Mammary epithelial cell (primary cell): ENCODE measurements at regions of chr16 and their contacts with region 1.

Region 1: DNA sequence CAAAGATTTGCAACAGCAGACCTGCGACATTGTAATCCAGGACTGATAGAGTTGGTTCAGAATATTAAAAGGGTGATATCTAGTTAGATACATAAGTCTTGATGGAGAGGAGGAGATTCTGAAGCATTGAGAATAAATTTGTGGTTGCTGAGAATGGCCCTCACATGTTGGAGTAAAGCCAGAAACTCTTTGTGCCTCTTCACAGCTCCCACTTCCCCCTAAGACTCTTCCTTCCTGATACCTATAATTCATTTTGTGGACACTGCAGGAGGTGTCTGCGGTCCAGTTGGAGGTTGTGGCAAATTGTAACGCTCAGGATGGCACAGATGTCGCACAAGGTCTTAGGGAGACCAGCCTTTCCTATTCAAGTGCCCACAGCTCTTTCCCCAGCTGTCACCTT is 17.5 kb downstream of the WWOX start:
- DNase-seq: no peak
- H3K4me3 ChIP-seq: no peak overlapping the region
- H3K27ac ChIP-seq: no peak overlapping the region
- H3K4me1 ChIP-seq: no peaks in the 10 kb centered on the region
- H3K27me3 ChIP-seq: no peaks in the 10 kb centered on the region
- CTCF ChIP-seq: no peak

Region 2: DNA sequence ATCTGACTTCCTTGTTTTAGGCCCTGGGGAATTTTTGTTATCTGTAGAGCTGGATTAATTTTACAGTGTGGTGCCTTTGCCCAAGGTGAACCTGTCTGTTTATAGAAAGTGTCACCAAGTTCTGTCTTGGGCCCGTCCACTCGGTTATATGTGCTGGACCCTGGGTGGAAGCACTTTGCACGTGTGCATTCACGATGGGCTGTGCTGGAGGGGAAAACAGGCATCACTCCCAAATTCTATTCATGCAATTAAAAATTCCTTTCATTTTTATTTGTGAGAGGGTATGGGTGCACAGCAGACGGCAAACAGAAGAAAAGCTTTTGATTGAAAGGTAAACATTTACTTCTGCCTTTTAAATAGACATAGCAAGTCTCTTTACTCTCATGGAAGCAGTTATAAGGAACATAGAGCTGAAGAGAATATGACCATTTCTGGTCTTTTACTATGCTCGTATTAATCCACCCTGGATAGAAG is 83.7 kb after region 1 on chr16:
- CTCF ChIA-PET with region 1: no interaction called
- dilution Hi-C with region 1: loop called (anchors 5 kb)
- in situ Hi-C with region 1: no loop called
- intact Hi-C with region 1: no loop called
- DNase-seq: no peak
- H3K4me3 ChIP-seq: no peak overlapping the region
- H3K27ac ChIP-seq: no peak overlapping the region
- H3K4me1 ChIP-seq: no peaks in the 10 kb centered on the region
- H3K27me3 ChIP-seq: no peaks in the 10 kb centered on the region
- CTCF ChIP-seq: no peak

Region 3: DNA sequence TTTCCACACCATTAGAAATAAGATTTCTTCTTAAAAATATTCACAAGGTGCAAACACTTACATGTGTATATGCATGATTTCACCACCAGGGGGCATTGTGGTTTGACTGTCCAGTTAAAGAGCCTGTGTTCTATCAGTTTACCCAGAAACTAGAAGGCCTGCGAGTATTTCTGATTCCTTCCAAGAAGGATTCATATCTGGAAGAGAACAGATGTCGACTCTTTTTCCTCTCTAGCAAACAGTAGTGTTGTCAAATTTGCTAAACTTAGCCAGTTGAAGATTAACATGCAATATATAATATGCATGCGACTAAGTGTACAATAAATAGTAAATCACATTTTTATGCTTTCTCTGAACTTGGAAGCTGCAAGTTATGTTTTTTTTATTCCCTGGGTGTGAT is 386.7 kb after region 1 on chr16:
- CTCF ChIA-PET with region 1: no interaction called
- dilution Hi-C with region 1: loop called (anchors 10 kb)
- in situ Hi-C with region 1: no loop called
- intact Hi-C with region 1: no loop called
- DNase-seq: no peak
- H3K4me3 ChIP-seq: no peak overlapping the region
- H3K27ac ChIP-seq: no peak overlapping the region
- H3K4me1 ChIP-seq: peaks cover 9% of the 10 kb centered on the region
- H3K27me3 ChIP-seq: no peaks in the 10 kb centered on the region
- CTCF ChIP-seq: peak; percentile 69 to 78